ENCODE measurements at regions of chr19 and their contacts with region 1.

Region 1: DNA sequence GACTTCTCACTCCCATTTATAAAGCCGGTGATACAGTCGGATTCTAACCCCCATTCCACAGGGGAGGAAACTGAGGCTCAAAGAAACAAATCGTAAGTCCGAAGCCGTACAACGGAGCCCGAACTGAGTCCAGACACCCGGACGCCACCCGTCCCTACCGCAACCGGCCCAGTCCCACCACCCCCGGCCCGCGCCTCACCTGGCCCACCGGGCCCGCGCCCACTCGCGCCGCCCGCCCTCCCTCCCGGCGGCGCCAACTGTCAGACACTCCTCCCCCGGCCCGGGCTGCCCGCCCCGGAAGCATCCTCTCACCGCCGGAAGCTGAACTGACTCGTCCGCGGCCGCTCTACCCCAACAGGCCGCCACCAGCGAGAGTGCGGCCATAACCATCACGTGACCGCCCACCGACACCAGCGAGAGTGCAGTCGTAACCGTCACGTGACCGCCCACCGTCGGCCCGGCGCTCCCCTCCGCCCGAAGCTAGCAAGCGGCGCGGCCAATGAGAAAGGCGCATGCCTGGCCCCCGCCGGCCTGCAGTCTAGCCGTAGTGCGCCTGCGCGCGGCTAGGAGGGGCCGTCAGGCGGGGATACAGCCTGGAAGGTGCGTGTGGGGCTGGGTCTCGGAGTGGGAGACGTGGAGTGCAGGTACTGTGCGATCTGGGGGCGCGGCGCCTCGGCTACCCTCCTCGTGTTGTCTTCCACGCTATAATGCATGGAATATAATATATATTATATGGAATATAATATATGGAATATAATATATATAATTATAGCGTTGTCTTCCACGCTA is at the starts of genes C19orf47 and PLD3:
- DNase-seq: peak; percentile 100
- ATAC-seq: peak; percentile 99
- H3K4me3 ChIP-seq: peak within 1 kb of the TSS; percentile 50 to 74
- H3K27ac ChIP-seq: peak within 1 kb of the TSS in 1 of 2 donors; percentile 49
- H3K4me1 ChIP-seq: peaks cover 0 to 4% of the 10 kb centered on the region in 2 donors
- H3K27me3 ChIP-seq: no peaks in the 10 kb centered on the region
- total RNA-seq, gene C19orf47: 16.9 to 22.3 TPM
- total RNA-seq, gene PLD3: 184 to 291 TPM

Region 2: DNA sequence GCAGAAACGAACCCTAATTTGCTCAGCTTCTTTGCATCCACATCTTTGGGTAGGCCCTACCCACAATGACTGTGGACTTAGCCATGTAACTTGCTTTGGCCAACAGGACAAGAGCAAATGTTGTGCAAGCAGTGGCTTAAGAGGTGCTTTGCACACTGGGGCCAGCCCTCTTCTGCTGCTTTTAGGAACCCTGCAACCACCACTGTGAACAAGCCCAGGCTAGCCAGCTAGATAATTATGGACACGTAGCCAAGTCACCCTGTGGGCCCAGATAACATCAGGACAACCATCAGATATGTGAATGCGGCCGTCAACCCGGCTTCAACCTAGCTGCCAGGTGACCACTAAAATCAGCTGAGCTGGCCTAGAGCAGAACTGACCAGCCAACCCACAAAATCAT is 17.2 kb before region 1 on chr19:
- intact Hi-C with region 1: no loop called
- DNase-seq: no peak
- ATAC-seq: no peak
- H3K4me3 ChIP-seq: no peak overlapping the region
- H3K27ac ChIP-seq: no peak overlapping the region
- H3K4me1 ChIP-seq: no peaks in the 10 kb centered on the region
- H3K27me3 ChIP-seq: no peaks in the 10 kb centered on the region

Region 3: DNA sequence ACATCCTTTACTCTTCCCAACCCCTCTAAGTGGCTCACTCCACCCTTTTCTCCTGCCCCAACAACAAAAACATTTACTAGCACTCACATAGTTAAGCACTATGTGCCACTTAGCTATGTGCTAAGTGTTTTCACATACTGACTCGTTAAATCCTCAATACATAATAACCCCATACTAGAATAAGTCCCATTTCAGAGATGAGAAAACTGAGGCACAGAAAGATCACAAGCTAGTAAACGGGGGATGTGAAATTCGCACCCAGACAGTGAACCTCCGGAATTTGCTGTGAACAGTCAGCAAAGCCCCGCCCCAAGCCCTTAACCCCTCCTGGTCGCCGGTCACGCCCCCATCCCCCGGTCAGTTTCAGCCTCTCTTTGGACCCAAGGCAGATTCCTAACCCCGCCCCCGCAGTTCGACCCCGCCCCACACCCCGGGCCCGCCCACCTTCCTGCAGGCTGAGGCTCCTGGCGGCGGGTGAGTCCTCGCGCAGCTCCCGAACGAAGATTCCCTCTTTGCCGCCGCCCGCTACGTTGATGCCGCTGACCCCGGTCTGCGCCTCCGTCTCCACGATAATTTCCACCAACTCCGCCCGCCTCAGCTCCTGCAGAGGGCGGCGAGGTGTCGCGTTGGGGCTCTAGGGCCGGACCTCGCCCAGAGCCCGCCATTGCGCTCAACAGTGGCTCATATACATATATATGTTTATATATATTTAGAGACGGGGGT is 55.1 kb after region 1 on chr19:
- intact Hi-C with region 1: loop called in 1 of 2 experiments (anchors 5 kb)
- DNase-seq: peak; percentile 96 to 98
- ATAC-seq: peak; percentile 94
- H3K4me3 ChIP-seq: peak overlapping the region; percentile 39 to 44
- H3K27ac ChIP-seq: peak overlapping the region in 1 of 2 donors; percentile 69
- H3K4me1 ChIP-seq: no peaks in the 10 kb centered on the region
- H3K27me3 ChIP-seq: no peaks in the 10 kb centered on the region

Region 4: DNA sequence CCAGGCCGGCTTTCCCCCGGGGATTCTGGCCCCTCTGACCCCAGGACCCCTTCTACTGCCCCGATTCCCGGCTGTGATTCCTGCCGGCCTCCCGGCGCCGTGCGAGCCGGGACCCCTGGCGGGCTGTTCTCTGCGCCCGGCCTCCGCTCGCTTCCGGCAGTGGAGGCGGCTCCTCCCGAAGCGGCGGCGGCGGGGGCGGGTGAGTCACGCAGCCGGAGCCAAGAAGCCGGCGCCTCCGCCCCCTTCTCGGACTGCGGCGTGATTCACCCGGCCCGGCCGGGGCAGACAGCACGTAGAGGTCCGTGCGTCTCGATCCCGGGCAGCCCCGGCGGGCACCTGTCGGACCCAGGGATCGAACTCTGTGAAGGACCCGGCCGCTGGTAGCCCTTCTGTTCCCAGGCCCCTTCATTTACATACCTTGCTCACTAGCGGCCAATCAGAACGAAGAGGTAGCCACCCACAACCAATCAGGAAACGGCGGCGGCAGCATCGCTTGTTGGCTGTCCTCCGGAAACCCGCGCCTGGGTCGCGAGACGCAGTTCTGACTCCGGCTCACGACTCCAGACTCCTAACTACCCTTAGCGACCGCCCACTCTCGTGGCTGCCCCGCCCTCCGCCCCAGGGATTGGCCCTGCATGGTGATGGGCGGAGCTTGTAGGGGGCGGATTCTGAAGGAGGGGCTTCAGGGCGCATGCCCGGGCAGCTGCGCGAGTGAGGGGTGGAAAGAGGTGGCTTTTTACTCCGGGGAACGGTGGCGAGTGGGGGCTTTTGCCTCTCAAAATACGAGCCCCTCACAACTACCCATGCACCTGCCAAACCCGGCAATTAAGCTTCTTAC is 77.3 kb after region 1 on chr19 and contains the start of gene SERTAD1:
- intact Hi-C with region 1: loop called in 1 of 2 experiments (anchors 5 kb)
- DNase-seq: peak; percentile 99 to 100
- ATAC-seq: peak; percentile 96
- H3K4me3 ChIP-seq: peak within 1 kb of the TSS; percentile 74 to 88
- H3K27ac ChIP-seq: peak within 1 kb of the TSS; percentile 99 to 100
- H3K4me1 ChIP-seq: no peaks in the 10 kb centered on the region
- H3K27me3 ChIP-seq: no peaks in the 10 kb centered on the region
- total RNA-seq, gene SERTAD1: 19.7 to 27.8 TPM

Region 5: GRCh38 chr19:40603389-40604135 is 255.2 kb after region 1 on chr19:
- intact Hi-C with region 1: loop called in 1 of 2 experiments (anchors 5 kb)
- DNase-seq: peak; percentile 98 to 99
- ATAC-seq: peak; percentile 87
- H3K4me3 ChIP-seq: peak overlapping the region in 1 of 2 donors; percentile 11
- H3K27ac ChIP-seq: peak overlapping the region; percentile 5 to 69
- H3K4me1 ChIP-seq: no peaks in the 10 kb centered on the region
- H3K27me3 ChIP-seq: no peaks in the 10 kb centered on the region

Measured in aorta (tissue), 5 donors.